AG04449 (cell line): ENCODE measurements at regions of chr6 and their contacts with region 1.

Region 1: GRCh38 chr6:157235600-157236039 is 87.7 kb downstream of the TMEM242 start:
- DNase-seq: no peak
- H3K4me3 ChIP-seq: peak overlapping the region; percentile 51
- CTCF ChIP-seq: peak; percentile 81

Region 2: GRCh38 chr6:157223021-157223430 is 12.6 kb before region 1 on chr6:
- CTCF ChIA-PET with region 1: interaction called, 10 read pairs
- POLR2A ChIA-PET with region 1: no interaction called
- DNase-seq: no peak
- H3K4me3 ChIP-seq: no peak overlapping the region
- CTCF ChIP-seq: no peak

Region 3: GRCh38 chr6:157405986-157406385 is 170.4 kb after region 1 on chr6:
- CTCF ChIA-PET with region 1: no interaction called
- POLR2A ChIA-PET with region 1: no interaction called
- DNase-seq: no peak
- H3K4me3 ChIP-seq: no peak overlapping the region
- CTCF ChIP-seq: no peak